Naive thymus-derived CD4-positive, alpha-beta T cell (primary cell): ENCODE measurements at regions of chr10 and their contacts with region 1.

Region 1: DNA sequence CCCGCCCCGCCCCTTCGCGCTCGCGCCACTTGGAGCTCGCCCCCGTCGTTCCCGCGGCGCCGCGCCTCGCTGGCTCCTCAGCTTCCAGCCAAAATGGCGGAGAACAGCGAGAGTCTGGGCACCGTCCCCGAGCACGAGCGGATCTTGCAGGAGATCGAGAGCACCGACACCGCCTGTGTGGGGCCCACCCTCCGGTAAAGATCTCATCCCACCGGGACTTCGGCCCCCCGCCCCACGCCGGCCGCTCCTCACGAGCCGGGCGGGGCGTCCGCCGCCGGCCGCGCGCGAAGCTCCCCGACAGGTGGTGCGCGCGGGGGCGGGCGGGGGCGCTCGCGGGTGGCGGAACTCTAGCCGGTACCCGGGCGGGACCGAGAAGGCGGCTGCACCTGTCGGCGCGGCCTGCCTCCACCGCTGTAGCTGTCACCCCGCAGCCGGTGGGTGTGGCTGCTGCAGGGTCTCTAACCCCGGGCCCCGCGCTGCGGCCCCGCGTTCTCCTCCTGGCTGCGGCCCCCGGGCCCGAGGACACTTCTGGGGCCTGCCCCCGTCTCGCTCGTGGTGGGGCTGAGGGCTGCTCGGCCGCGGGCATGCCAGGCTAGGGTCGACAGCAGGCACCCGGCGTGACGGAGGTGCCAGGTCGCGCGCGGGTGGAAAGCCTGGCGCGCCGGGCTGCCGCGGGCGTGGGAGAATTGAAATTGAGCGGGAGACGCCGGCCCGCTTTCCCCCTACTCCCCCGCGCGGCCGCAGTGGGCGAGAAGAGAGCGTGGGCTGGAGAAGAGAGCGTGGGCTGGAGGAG is at the start of gene EXOC6:
- DNase-seq: peak; percentile 78 to 93 (median 91)
- ATAC-seq: peak; percentile 91
- H3K4me3 ChIP-seq: peak within 1 kb of the TSS; percentile 70
- H3K4me3 Mint-ChIP-seq: peak within 1 kb of the TSS; percentile 81 to 94 (median 91)
- H3K27ac ChIP-seq: peak within 1 kb of the TSS; percentile 95
- H3K27ac Mint-ChIP-seq: peak within 1 kb of the TSS; percentile 56 to 95 (median 92)
- H3K4me1 ChIP-seq: peaks cover 7 to 19% of the 10 kb centered on the region in 2 donors
- H3K4me1 Mint-ChIP-seq: peaks cover 4 to 48% (median 36%) of the 10 kb centered on the region in 7 donors
- H3K27me3 ChIP-seq: no peaks in the 10 kb centered on the region
- H3K27me3 Mint-ChIP-seq: no peaks in the 10 kb centered on the region
- total RNA-seq, gene EXOC6: 8.1 to 12.1 (median 11.4) TPM

Region 2: GRCh38 chr10:91163269-91163868 is 1685.3 kb before region 1 on chr10:
- CTCF ChIA-PET with region 1: no interaction called
- POLR2A ChIA-PET with region 1: interaction called, 3 read pairs
- intact Hi-C with region 1: loop called in 1 of 2 experiments (anchors 1 kb)
- DNase-seq: peak; percentile 72 to 92 (median 88)
- ATAC-seq: peak; percentile 75
- H3K4me3 ChIP-seq: peak overlapping the region; percentile 74
- H3K4me3 Mint-ChIP-seq: peak overlapping the region; percentile 88 to 95 (median 93)
- H3K27ac ChIP-seq: peak overlapping the region; percentile 96
- H3K27ac Mint-ChIP-seq: peak overlapping the region; percentile 88 to 98 (median 95)
- H3K4me1 ChIP-seq: peaks cover 8 to 20% of the 10 kb centered on the region in 2 donors
- H3K4me1 Mint-ChIP-seq: peaks cover 27 to 61% (median 51%) of the 10 kb centered on the region in 7 donors
- H3K27me3 ChIP-seq: no peaks in the 10 kb centered on the region
- H3K27me3 Mint-ChIP-seq: peaks cover 0 to 19% (median 0%) of the 10 kb centered on the region in 5 donors

Region 3: DNA sequence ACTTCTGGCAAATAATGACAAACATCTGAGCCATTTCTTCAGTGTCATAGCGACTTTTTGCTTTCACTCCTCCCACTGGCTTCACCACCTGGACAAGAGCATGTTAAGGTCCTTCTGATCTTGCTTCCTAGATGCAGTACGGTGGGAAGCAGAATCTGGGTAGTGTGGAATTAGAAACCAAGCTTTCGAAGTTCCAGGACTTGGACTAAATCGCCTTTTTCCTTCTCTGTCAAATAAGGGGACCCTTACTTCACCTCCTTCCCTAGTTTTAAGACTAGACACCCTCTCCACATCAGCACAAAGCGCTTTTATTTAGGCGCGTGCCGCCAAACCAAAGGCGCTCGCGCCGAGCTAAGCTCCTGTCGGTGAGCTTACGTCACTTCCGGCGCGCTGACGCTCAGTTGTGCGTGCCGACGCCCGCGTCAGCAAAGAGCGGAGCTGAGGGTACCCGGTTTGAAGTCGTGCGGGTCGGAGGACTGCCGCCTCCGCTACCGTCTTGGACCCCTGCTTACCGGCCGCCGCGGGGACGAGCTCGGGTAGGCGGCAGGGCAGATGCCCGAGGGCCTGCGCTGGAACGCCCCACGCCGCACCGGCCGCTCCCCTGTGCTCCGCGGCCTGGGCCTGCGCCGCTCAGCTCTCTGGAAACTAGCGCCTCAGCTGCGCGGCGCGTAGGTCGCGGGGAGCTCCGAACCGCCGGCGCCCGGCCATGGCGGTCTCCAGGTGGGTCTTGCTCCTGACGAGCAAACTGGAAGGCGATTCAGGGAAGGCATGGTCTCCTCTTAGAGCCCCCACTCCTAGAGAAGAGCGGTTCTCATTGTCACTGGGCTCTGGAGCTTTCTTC is 925.0 kb before region 1 on chr10 and contains the start of gene BTAF1:
- CTCF ChIA-PET with region 1: no interaction called
- POLR2A ChIA-PET with region 1: no interaction called
- intact Hi-C with region 1: loop called in 1 of 2 experiments (anchors 1 kb)
- DNase-seq: peak; percentile 86 to 93 (median 91)
- ATAC-seq: peak; percentile 97
- H3K4me3 ChIP-seq: peak within 1 kb of the TSS; percentile 70
- H3K4me3 Mint-ChIP-seq: peak within 1 kb of the TSS; percentile 91 to 100 (median 96)
- H3K27ac ChIP-seq: peak within 1 kb of the TSS; percentile 96
- H3K27ac Mint-ChIP-seq: peak within 1 kb of the TSS; percentile 97 to 99 (median 98)
- H3K4me1 ChIP-seq: peaks cover 9 to 25% of the 10 kb centered on the region in 2 donors
- H3K4me1 Mint-ChIP-seq: peaks cover 22 to 62% (median 45%) of the 10 kb centered on the region in 7 donors
- H3K27me3 ChIP-seq: no peaks in the 10 kb centered on the region
- H3K27me3 Mint-ChIP-seq: peaks cover under 1 to 8% (median 5%) of the 10 kb centered on the region in 5 donors
- total RNA-seq, gene BTAF1: 55.7 to 84.8 (median 78.5) TPM

Region 4: DNA sequence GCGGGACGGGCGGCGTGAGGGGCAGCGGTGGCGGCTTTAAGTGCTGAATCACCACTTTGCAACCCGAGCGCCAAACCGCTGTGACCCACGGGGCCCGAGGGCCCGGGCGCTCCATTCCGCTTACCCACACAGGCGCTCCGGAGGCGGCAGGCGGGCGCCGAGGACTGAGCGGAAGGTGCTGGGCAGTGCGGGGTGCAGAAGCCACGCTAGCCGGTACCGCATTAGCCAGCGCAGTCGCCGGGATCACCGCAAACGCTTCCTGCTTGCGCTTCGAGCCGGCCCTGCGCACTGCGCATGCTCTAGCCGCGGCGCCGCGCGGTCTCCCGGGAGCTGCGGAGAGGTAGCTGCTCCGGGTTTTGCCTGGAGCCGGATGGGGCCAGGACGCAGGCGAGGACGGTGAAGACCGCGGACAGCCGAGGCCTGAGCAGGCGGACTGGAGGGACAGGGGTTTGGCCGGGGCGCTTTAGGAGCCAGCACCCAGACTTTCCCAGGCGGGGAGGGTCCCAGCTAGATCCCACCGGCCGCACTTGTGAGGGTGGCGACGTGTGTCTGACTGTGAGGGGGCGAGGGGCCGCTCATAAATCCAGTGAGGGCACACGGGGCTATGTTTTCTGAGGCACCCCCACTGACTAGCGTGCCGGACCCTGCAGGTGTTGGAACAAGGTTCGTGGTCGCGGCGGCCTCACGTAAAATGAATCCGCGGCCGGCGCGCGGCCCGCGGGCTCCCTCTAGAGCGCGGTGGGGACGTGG is 274.7 kb before region 1 on chr10 and contains the start of gene IDE:
- CTCF ChIA-PET with region 1: no interaction called
- POLR2A ChIA-PET with region 1: interaction called, 4 read pairs
- intact Hi-C with region 1: loop called in 1 of 2 experiments (anchors 5 kb)
- DNase-seq: peak; percentile 70 to 89 (median 77)
- ATAC-seq: peak; percentile 88
- H3K4me3 ChIP-seq: peak within 1 kb of the TSS; percentile 90
- H3K4me3 Mint-ChIP-seq: peak within 1 kb of the TSS; percentile 78 to 94 (median 88)
- H3K27ac ChIP-seq: peak within 1 kb of the TSS; percentile 83
- H3K27ac Mint-ChIP-seq: peak within 1 kb of the TSS; percentile 78 to 95 (median 89)
- H3K4me1 ChIP-seq: peaks cover 12 to 14% of the 10 kb centered on the region in 2 donors
- H3K4me1 Mint-ChIP-seq: peaks cover 27 to 39% (median 38%) of the 10 kb centered on the region in 7 donors
- H3K27me3 ChIP-seq: no peaks in the 10 kb centered on the region
- H3K27me3 Mint-ChIP-seq: no peaks in the 10 kb centered on the region
- total RNA-seq, gene IDE: 20.7 to 36.7 (median 28.4) TPM

Region 5: GRCh38 chr10:92886334-92886961 is 37.8 kb after region 1 on chr10:
- CTCF ChIA-PET with region 1: interaction called, 23 read pairs
- POLR2A ChIA-PET with region 1: interaction called, 3 read pairs
- intact Hi-C with region 1: no loop called
- DNase-seq: no peak
- ATAC-seq: no peak
- H3K4me3 ChIP-seq: no peak overlapping the region
- H3K4me3 Mint-ChIP-seq: no peak overlapping the region
- H3K27ac ChIP-seq: no peak overlapping the region
- H3K27ac Mint-ChIP-seq: no peak overlapping the region
- H3K4me1 ChIP-seq: no peaks in the 10 kb centered on the region
- H3K4me1 Mint-ChIP-seq: peaks cover 0 to 13% (median 8%) of the 10 kb centered on the region in 7 donors
- H3K27me3 ChIP-seq: no peaks in the 10 kb centered on the region
- H3K27me3 Mint-ChIP-seq: peaks cover 0 to 2% (median 0%) of the 10 kb centered on the region in 5 donors

Region 6: DNA sequence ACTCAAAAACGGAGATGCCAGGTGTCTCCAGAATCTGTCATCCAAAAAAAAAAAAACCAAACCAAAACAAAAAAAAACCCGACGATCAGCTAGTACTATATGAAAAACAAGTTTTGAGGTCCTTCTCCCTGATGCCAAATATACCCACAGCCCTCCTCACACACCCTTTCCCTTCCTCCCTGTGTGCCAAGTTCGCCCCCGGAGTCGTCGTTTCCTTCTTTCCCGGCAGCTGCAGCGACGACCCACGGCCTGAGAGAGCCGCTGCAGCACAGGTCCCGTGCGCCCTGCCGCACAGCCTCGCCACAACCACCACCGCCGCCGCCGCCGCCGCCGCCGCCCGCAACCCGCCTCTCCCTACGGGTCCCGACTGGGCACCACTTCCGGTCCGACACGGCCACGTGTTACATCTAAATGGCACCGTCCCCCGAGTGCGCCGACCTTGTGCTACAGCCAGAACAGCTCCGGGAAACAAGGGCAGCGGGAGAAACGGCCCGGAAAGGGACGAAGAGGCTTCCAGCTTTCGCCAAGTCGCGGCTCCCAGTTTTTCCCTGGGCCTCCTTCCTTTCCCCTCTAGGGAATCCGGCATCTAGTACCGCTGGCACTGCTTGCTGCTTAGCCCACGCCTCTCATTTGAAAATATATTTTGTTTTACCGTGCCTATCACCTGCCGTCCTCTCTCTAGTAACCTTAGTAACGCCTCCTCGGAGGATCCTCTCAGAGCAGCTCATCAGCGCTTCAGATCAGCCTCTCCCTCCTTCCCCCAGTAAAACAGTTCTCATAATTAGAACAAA is 853.8 kb after region 1 on chr10 and contains the start of gene FRA10AC1:
- CTCF ChIA-PET with region 1: no interaction called
- POLR2A ChIA-PET with region 1: no interaction called
- intact Hi-C with region 1: loop called (anchors 2 kb)
- DNase-seq: peak; percentile 77 to 92 (median 85)
- ATAC-seq: peak; percentile 97
- H3K4me3 ChIP-seq: peak within 1 kb of the TSS; percentile 85
- H3K4me3 Mint-ChIP-seq: no peak within 1 kb of the TSS
- H3K27ac ChIP-seq: peak within 1 kb of the TSS; percentile 73
- H3K27ac Mint-ChIP-seq: no peak within 1 kb of the TSS
- H3K4me1 ChIP-seq: peaks cover 9 to 16% of the 10 kb centered on the region in 2 donors
- H3K4me1 Mint-ChIP-seq: peaks cover 8 to 29% (median 11%) of the 10 kb centered on the region in 7 donors
- H3K27me3 ChIP-seq: no peaks in the 10 kb centered on the region
- H3K27me3 Mint-ChIP-seq: no peaks in the 10 kb centered on the region
- total RNA-seq, gene FRA10AC1: 15.5 to 31.0 (median 22.7) TPM